ENCODE measurements at regions of chr18 and their contacts with region 1.

Region 1: GRCh38 chr18:63439334-63439733 is 17.1 kb upstream of the VPS4B start:
- DNase-seq: peak; percentile 79
- ATAC-seq: peak; percentile 34
- H3K4me3 ChIP-seq: no peak overlapping the region
- H3K27ac ChIP-seq: no peak overlapping the region
- H3K4me1 ChIP-seq: peaks cover 20% of the 10 kb centered on the region
- H3K27me3 ChIP-seq: no peaks in the 10 kb centered on the region
- CTCF ChIP-seq: peak; percentile 92

Region 2: GRCh38 chr18:63016270-63016669 is 423.1 kb before region 1 on chr18:
- CTCF ChIA-PET with region 1: no interaction called
- POLR2A ChIA-PET with region 1: no interaction called
- intact Hi-C with region 1: loop called (anchors 2 kb)
- DNase-seq: peak; percentile 67
- ATAC-seq: peak; percentile 64; the same call in 1 of the 2 replicates
- H3K4me3 ChIP-seq: no peak overlapping the region
- H3K27ac ChIP-seq: no peak overlapping the region
- H3K4me1 ChIP-seq: no peaks in the 10 kb centered on the region
- H3K27me3 ChIP-seq: peaks cover 74% of the 10 kb centered on the region
- CTCF ChIP-seq: peak; percentile 80

Region 3: DNA sequence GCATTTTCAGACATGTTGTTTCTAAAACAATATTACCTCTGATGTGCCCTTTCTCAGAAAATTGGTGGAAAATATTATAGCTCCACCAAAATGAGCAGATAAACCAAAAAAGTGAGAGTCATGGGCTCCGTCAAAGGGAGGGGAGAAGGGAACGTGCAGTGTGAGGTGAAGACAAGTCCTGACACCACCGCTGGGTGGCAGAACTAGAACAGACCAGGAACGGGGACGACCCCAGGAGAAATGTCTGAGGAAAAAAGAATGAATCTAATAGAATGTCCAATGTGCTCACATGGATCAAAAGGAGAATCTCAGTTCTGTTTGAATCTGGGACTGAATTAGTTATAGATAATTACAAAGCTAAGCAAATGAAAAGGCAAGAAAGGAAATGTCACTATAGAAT is 97.1 kb before region 1 on chr18:
- CTCF ChIA-PET with region 1: no interaction called
- POLR2A ChIA-PET with region 1: interaction called, 4 read pairs
- intact Hi-C with region 1: loop called (anchors 1 kb)
- DNase-seq: peak; percentile 52
- ATAC-seq: peak; percentile 81
- H3K4me3 ChIP-seq: no peak overlapping the region
- H3K27ac ChIP-seq: no peak overlapping the region
- H3K4me1 ChIP-seq: no peaks in the 10 kb centered on the region
- H3K27me3 ChIP-seq: no peaks in the 10 kb centered on the region
- CTCF ChIP-seq: peak; percentile 77

Region 4: GRCh38 chr18:63422087-63422809 is 17.1 kb before region 1 on chr18 and contains the start of gene VPS4B:
- CTCF ChIA-PET with region 1: interaction called, 5 read pairs
- POLR2A ChIA-PET with region 1: interaction called, 10 read pairs
- intact Hi-C with region 1: no loop called
- DNase-seq: peak; percentile 99
- ATAC-seq: peak; percentile 95
- H3K4me3 ChIP-seq: peak within 1 kb of the TSS; percentile 95
- H3K27ac ChIP-seq: peak within 1 kb of the TSS; percentile 81
- H3K4me1 ChIP-seq: peaks cover 18% of the 10 kb centered on the region
- H3K27me3 ChIP-seq: no peaks in the 10 kb centered on the region
- CTCF ChIP-seq: no peak
- total RNA-seq, gene VPS4B: 44.7 and 50.3 TPM in 2 replicates

Region 5: GRCh38 chr18:63492851-63493250 is 53.5 kb after region 1 on chr18:
- CTCF ChIA-PET with region 1: no interaction called
- POLR2A ChIA-PET with region 1: no interaction called
- intact Hi-C with region 1: no loop called
- DNase-seq: no peak
- ATAC-seq: no peak
- H3K4me3 ChIP-seq: no peak overlapping the region
- H3K27ac ChIP-seq: no peak overlapping the region
- H3K4me1 ChIP-seq: no peaks in the 10 kb centered on the region
- H3K27me3 ChIP-seq: no peaks in the 10 kb centered on the region
- CTCF ChIP-seq: no peak

Region 6: GRCh38 chr18:63505566-63506335 is 66.4 kb after region 1 on chr18:
- CTCF ChIA-PET with region 1: interaction called, 13 read pairs
- POLR2A ChIA-PET with region 1: no interaction called
- intact Hi-C with region 1: loop called (anchors 2 kb)
- DNase-seq: peak; percentile 75
- ATAC-seq: peak; percentile 81
- H3K4me3 ChIP-seq: no peak overlapping the region
- H3K27ac ChIP-seq: no peak overlapping the region
- H3K4me1 ChIP-seq: no peaks in the 10 kb centered on the region
- H3K27me3 ChIP-seq: no peaks in the 10 kb centered on the region
- CTCF ChIP-seq: peak; percentile 89

Measured in PC-3 (cell line).